Right ventricle myocardium superior (tissue), 1 donor: ENCODE measurements at regions of chr17 and their contacts with region 1.

Region 1: GRCh38 chr17:38735161-38735997 is 5.2 kb downstream of the CISD3 start:
- DNase-seq: peak; percentile 79
- ATAC-seq: peak; percentile 32

Region 2: GRCh38 chr17:38676706-38677504 is 58.5 kb before region 1 on chr17:
- intact Hi-C with region 1: loop called (anchors 2 kb)
- DNase-seq: peak; percentile 90
- ATAC-seq: peak; percentile 81

Region 3: DNA sequence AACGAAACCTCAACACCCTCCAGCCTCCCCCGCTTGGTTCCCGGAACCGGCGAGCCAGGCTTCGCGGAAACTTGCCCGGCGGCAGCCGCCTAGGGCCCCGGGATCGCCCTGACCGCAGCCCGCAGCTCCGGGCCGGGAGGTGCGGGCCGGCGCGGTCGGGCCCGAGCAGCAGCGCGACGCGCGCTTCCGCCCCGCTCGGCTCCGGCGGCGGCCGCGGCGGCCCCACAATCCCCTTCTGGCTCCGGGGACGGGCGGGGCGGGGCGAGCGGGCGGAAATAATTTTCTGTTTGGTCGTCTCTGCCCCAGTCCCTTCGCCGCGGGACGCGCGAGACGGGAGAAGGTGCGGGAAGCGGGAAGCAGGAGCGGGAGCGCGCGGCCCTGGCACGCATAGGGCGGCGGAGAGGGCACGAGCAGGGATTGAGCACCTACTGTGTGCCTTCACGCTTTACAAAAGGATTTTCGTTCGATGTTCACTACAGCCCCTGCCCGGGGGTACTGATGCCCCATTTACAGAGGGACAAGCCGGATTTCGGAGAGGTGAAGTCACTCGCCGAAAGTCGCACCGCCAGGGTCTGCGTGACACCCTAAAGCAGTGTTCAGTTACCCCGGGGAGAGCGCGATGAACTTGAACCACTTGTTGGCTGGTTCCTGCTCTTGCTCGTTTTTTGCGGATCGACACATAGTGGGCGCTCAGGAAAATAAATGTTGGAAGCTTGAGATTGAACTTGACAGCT is 33.0 kb before region 1 on chr17:
- intact Hi-C with region 1: loop called (anchors 5 kb)
- DNase-seq: peak; percentile 91
- ATAC-seq: peak; percentile 71

Region 4: GRCh38 chr17:39605492-39606433 is 870.4 kb after region 1 on chr17:
- intact Hi-C with region 1: no loop called
- DNase-seq: peak; percentile 38
- ATAC-seq: peak; percentile 50